WTC11 (cell line): ENCODE measurements at regions of chr10 and their contacts with region 1.

Region 1: GRCh38 chr10:5283305-5284158 is 81.2 kb upstream of the UCN3 start:
- DNase-seq: peak; percentile 66
- ATAC-seq: peak; percentile 89
- H3K4me3 Mint-ChIP-seq: no peak overlapping the region
- H3K27ac Mint-ChIP-seq: no peak overlapping the region
- H3K4me1 Mint-ChIP-seq: peaks cover 26% of the 10 kb centered on the region
- H3K27me3 Mint-ChIP-seq: no peaks in the 10 kb centered on the region
- CTCF ChIP-seq: peak; percentile 53

Region 2: GRCh38 chr10:5106553-5106952 is 177.0 kb before region 1 on chr10:
- CTCF ChIA-PET with region 1: no interaction called
- POLR2A ChIA-PET with region 1: no interaction called
- DNase-seq: no peak
- ATAC-seq: no peak
- H3K4me3 Mint-ChIP-seq: no peak overlapping the region
- H3K27ac Mint-ChIP-seq: no peak overlapping the region
- H3K4me1 Mint-ChIP-seq: no peaks in the 10 kb centered on the region
- H3K27me3 Mint-ChIP-seq: no peaks in the 10 kb centered on the region
- CTCF ChIP-seq: no peak

Region 3: GRCh38 chr10:5293691-5294550 is 10.4 kb after region 1 on chr10:
- CTCF ChIA-PET with region 1: interaction called, 10 read pairs
- POLR2A ChIA-PET with region 1: no interaction called
- DNase-seq: peak; percentile 98
- ATAC-seq: peak; percentile 99
- H3K4me3 Mint-ChIP-seq: no peak overlapping the region
- H3K27ac Mint-ChIP-seq: no peak overlapping the region
- H3K4me1 Mint-ChIP-seq: peaks cover 30% of the 10 kb centered on the region
- H3K27me3 Mint-ChIP-seq: no peaks in the 10 kb centered on the region
- CTCF ChIP-seq: peak; percentile 41; the same call in 1 of the 2 replicates

Region 4: GRCh38 chr10:5305374-5305773 is 21.8 kb after region 1 on chr10:
- CTCF ChIA-PET with region 1: no interaction called
- POLR2A ChIA-PET with region 1: no interaction called
- DNase-seq: no peak
- ATAC-seq: no peak
- H3K4me3 Mint-ChIP-seq: no peak overlapping the region
- H3K27ac Mint-ChIP-seq: no peak overlapping the region
- H3K4me1 Mint-ChIP-seq: no peaks in the 10 kb centered on the region
- H3K27me3 Mint-ChIP-seq: no peaks in the 10 kb centered on the region; the same call in 1 of the 2 replicates
- CTCF ChIP-seq: no peak

Region 5: GRCh38 chr10:5416981-5417380 is 133.4 kb after region 1 on chr10:
- CTCF ChIA-PET with region 1: no interaction called
- POLR2A ChIA-PET with region 1: no interaction called
- DNase-seq: peak; percentile 50
- ATAC-seq: peak; percentile 52
- H3K4me3 Mint-ChIP-seq: peak overlapping the region; percentile 56
- H3K27ac Mint-ChIP-seq: peak overlapping the region; percentile 75
- H3K4me1 Mint-ChIP-seq: peaks cover 14% of the 10 kb centered on the region
- H3K27me3 Mint-ChIP-seq: no peaks in the 10 kb centered on the region
- CTCF ChIP-seq: no peak